ENCODE measurements at regions of chr5 and their contacts with region 1.

Region 1: GRCh38 chr5:148730943-148731861 is 76.9 kb upstream of the HTR4 start:
- DNase-seq: peak; percentile 27 to 85 (median 48)
- ATAC-seq: peak; percentile 95
- H3K4me3 ChIP-seq: peak overlapping the region; percentile 24
- H3K4me3 Mint-ChIP-seq: peak overlapping the region; percentile 57
- H3K27ac ChIP-seq: no peak overlapping the region
- H3K27ac Mint-ChIP-seq: no peak overlapping the region
- H3K4me1 ChIP-seq: no peaks in the 10 kb centered on the region
- H3K4me1 Mint-ChIP-seq: peaks cover 5% of the 10 kb centered on the region
- H3K27me3 ChIP-seq: no peaks in the 10 kb centered on the region
- H3K27me3 Mint-ChIP-seq: peaks cover 11% of the 10 kb centered on the region
- CTCF ChIP-seq: peak; percentile 98

Region 2: GRCh38 chr5:148179234-148179824 is 551.9 kb before region 1 on chr5:
- CTCF ChIA-PET with region 1: interaction called, 5 read pairs
- POLR2A ChIA-PET with region 1: no interaction called
- intact Hi-C with region 1: loop called (anchors 1 to 2 kb)
- DNase-seq: peak in 4 of 14 experiments; percentile 4 to 69 (median 61)
- ATAC-seq: peak; percentile 49
- H3K4me3 ChIP-seq: no peak overlapping the region
- H3K4me3 Mint-ChIP-seq: no peak overlapping the region
- H3K27ac ChIP-seq: no peak overlapping the region
- H3K27ac Mint-ChIP-seq: no peak overlapping the region
- H3K4me1 ChIP-seq: no peaks in the 10 kb centered on the region
- H3K4me1 Mint-ChIP-seq: no peaks in the 10 kb centered on the region
- H3K27me3 ChIP-seq: peaks cover 0 to 6% of the 10 kb centered on the region in 2 experiments
- H3K27me3 Mint-ChIP-seq: peaks cover 19% of the 10 kb centered on the region
- CTCF ChIP-seq: peak; percentile 67

Region 3: DNA sequence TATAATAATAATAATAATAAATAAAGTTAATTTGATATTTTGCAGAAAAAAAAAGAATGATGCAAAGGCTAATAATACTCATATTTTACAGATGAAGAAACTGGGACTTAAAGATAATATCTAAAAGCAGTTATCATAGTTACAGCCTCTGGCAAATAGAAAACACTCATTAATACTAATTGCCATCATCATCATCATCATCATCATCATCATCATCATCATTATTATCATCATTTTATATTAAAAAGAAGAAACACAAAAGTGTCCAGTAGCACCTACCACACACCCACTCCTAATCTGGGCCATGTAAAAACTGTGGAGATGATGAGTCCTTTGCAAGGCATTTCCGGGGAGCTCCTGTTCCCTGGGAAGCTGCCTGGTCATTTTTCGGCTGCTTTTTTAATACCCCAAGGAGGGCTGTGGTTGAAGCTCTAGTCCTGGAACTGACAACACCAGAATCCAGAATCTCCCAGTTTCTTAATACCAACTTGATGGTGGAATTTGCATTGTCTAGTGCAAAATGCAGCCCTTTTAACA is 147.7 kb before region 1 on chr5:
- CTCF ChIA-PET with region 1: no interaction called
- POLR2A ChIA-PET with region 1: no interaction called
- intact Hi-C with region 1: no loop called
- DNase-seq: no peak
- ATAC-seq: no peak
- H3K4me3 ChIP-seq: no peak overlapping the region
- H3K4me3 Mint-ChIP-seq: no peak overlapping the region
- H3K27ac ChIP-seq: no peak overlapping the region
- H3K27ac Mint-ChIP-seq: no peak overlapping the region
- H3K4me1 ChIP-seq: no peaks in the 10 kb centered on the region
- H3K4me1 Mint-ChIP-seq: no peaks in the 10 kb centered on the region
- H3K27me3 ChIP-seq: no peaks in the 10 kb centered on the region
- H3K27me3 Mint-ChIP-seq: no peaks in the 10 kb centered on the region
- CTCF ChIP-seq: no peak

Region 4: GRCh38 chr5:148826053-148826738 is 95.0 kb after region 1 on chr5 and contains the start of gene ADRB2:
- CTCF ChIA-PET with region 1: interaction called, 3 read pairs
- POLR2A ChIA-PET with region 1: no interaction called
- intact Hi-C with region 1: loop called (anchors 5 kb)
- DNase-seq: peak; percentile 70 to 96 (median 82)
- ATAC-seq: peak; percentile 86
- H3K4me3 ChIP-seq: peak within 1 kb of the TSS; percentile 88
- H3K4me3 Mint-ChIP-seq: peak within 1 kb of the TSS; percentile 84
- H3K27ac ChIP-seq: peak within 1 kb of the TSS; percentile 53 to 68
- H3K27ac Mint-ChIP-seq: peak within 1 kb of the TSS; percentile 32
- H3K4me1 ChIP-seq: peaks cover 22% of the 10 kb centered on the region
- H3K4me1 Mint-ChIP-seq: peaks cover 30% of the 10 kb centered on the region
- H3K27me3 ChIP-seq: no peaks in the 10 kb centered on the region
- H3K27me3 Mint-ChIP-seq: peaks cover 13% of the 10 kb centered on the region
- CTCF ChIP-seq: no peak
- total RNA-seq, gene ADRB2: 1.2 to 1.6 TPM

Region 5: GRCh38 chr5:148998174-148998797 is 267.1 kb after region 1 on chr5:
- CTCF ChIA-PET with region 1: interaction called, 8 read pairs
- POLR2A ChIA-PET with region 1: interaction called, 3 read pairs
- intact Hi-C with region 1: loop called in 1 of 2 experiments (anchors 1 kb)
- DNase-seq: peak in 5 of 14 experiments; percentile 5 to 73 (median 66)
- ATAC-seq: no peak
- H3K4me3 ChIP-seq: no peak overlapping the region
- H3K4me3 Mint-ChIP-seq: no peak overlapping the region
- H3K27ac ChIP-seq: no peak overlapping the region
- H3K27ac Mint-ChIP-seq: no peak overlapping the region
- H3K4me1 ChIP-seq: no peaks in the 10 kb centered on the region
- H3K4me1 Mint-ChIP-seq: no peaks in the 10 kb centered on the region
- H3K27me3 ChIP-seq: no peaks in the 10 kb centered on the region
- H3K27me3 Mint-ChIP-seq: peaks cover 36% of the 10 kb centered on the region
- CTCF ChIP-seq: peak; percentile 32

Region 6: GRCh38 chr5:149268928-149269557 is 537.8 kb after region 1 on chr5:
- CTCF ChIA-PET with region 1: no interaction called
- POLR2A ChIA-PET with region 1: no interaction called
- intact Hi-C with region 1: loop called (anchors 2 kb)
- DNase-seq: peak in 3 of 14 experiments; percentile 57 to 68 (median 68)
- ATAC-seq: peak; percentile 48
- H3K4me3 ChIP-seq: no peak overlapping the region
- H3K4me3 Mint-ChIP-seq: peak overlapping the region; percentile 18
- H3K27ac ChIP-seq: no peak overlapping the region
- H3K27ac Mint-ChIP-seq: no peak overlapping the region
- H3K4me1 ChIP-seq: peaks cover 20% of the 10 kb centered on the region
- H3K4me1 Mint-ChIP-seq: peaks cover 20% of the 10 kb centered on the region
- H3K27me3 ChIP-seq: peaks cover 14 to 24% of the 10 kb centered on the region in 2 experiments
- H3K27me3 Mint-ChIP-seq: peaks cover 29% of the 10 kb centered on the region
- CTCF ChIP-seq: peak; percentile 89